Aorta (tissue), 5 donors: ENCODE measurements at regions of chr5 and their contacts with region 1.

Region 1: GRCh38 chr5:60597572-60598320 is 102.2 kb downstream of the DEPDC1B start:
- DNase-seq: no peak
- ATAC-seq: no peak
- H3K4me3 ChIP-seq: peak overlapping the region in 1 of 2 donors; percentile 18
- H3K27ac ChIP-seq: no peak overlapping the region
- H3K4me1 ChIP-seq: no peaks in the 10 kb centered on the region
- H3K27me3 ChIP-seq: no peaks in the 10 kb centered on the region

Region 2: GRCh38 chr5:60232036-60232795 is 365.5 kb before region 1 on chr5:
- intact Hi-C with region 1: no loop called
- DNase-seq: no peak
- ATAC-seq: no peak
- H3K4me3 ChIP-seq: no peak overlapping the region
- H3K27ac ChIP-seq: no peak overlapping the region
- H3K4me1 ChIP-seq: peaks cover 1 to 3% of the 10 kb centered on the region in 2 donors
- H3K27me3 ChIP-seq: no peaks in the 10 kb centered on the region

Region 3: GRCh38 chr5:60479543-60479942 is 118.2 kb before region 1 on chr5:
- intact Hi-C with region 1: loop called in 1 of 2 experiments (anchors 5 kb)
- DNase-seq: no peak
- ATAC-seq: no peak
- H3K4me3 ChIP-seq: no peak overlapping the region
- H3K27ac ChIP-seq: no peak overlapping the region
- H3K4me1 ChIP-seq: peaks cover 6 to 7% of the 10 kb centered on the region in 2 donors
- H3K27me3 ChIP-seq: no peaks in the 10 kb centered on the region

Region 4: DNA sequence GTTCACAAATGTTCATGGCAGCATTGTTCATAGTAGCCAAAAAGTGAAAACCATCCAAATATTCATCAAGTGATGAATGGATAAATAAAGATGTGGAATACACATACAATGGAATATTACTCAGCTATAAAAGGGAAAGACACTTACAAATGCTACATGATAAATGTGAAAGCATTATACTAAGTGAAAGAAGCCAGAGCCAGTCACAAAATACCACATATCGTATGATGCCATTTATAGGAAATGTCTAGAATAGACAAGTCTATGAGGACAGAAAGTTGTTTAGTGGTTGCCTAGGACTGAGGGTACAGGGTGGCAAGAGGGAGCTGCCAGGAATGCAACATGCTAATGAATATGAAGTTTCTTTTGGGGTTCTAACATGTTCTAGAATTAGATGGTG is 46.5 kb before region 1 on chr5:
- intact Hi-C with region 1: no loop called
- DNase-seq: no peak
- ATAC-seq: no peak
- H3K4me3 ChIP-seq: no peak overlapping the region
- H3K27ac ChIP-seq: no peak overlapping the region
- H3K4me1 ChIP-seq: peaks cover 0 to 2% of the 10 kb centered on the region in 2 donors
- H3K27me3 ChIP-seq: no peaks in the 10 kb centered on the region

Region 5: GRCh38 chr5:60649283-60649917 is 51.7 kb after region 1 on chr5:
- intact Hi-C with region 1: loop called in 1 of 2 experiments (anchors 5 kb)
- DNase-seq: no peak
- ATAC-seq: no peak
- H3K4me3 ChIP-seq: no peak overlapping the region
- H3K27ac ChIP-seq: no peak overlapping the region
- H3K4me1 ChIP-seq: peaks cover 0 to 4% of the 10 kb centered on the region in 2 donors
- H3K27me3 ChIP-seq: no peaks in the 10 kb centered on the region